Activated CD4-positive, alpha-beta T cell treated with anti-CD3 and anti-CD28 coated beads for 36 hours (primary cell): ENCODE measurements at regions of chr6 and their contacts with region 1.

Region 1: DNA sequence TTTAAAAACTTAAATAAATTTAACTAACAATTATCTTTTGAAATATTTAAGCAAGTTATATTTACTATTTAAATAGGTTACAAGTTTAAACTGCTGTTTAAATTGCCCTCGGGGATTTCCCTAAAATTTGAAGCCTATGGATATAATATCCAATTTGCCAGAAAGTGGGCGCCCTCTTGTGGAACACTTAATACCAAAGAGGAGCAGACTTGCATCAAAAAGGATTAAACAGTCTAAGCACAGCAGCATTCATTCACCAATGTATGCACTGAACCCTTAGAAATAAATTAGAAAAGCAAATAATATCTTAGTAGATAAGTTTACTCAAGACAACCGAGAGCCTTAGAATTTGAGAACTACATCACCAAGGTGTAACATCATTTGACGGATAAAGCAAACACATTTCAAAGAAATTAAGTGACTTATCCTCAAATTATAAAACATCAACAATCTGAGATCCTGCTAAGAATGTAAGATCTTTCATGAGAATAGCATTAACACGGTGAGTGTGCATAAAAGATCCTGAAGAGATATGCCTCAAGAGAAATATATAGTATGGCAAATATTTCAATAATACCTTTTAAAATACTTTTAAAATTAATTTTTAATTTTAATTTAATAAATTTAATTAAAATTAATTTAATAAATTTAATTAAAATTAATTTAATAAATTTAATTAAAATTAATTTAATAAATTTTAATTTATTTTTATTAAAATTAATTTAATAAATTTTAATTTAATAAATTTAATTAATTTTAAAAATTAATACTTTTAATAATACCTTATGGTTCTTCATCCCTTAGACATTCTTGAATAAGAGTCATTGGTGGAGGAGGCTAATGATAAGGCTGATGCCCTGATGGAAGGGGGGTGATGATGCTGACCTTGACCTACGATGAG is 11.5 kb upstream of the MEP1A start:
- DNase-seq: peak; percentile 61
- ATAC-seq: peak; percentile 19
- H3K4me3 Mint-ChIP-seq: no peak overlapping the region
- H3K27ac Mint-ChIP-seq: no peak overlapping the region
- H3K4me1 Mint-ChIP-seq: no peaks in the 10 kb centered on the region
- H3K27me3 Mint-ChIP-seq: peaks cover 6% of the 10 kb centered on the region

Region 2: DNA sequence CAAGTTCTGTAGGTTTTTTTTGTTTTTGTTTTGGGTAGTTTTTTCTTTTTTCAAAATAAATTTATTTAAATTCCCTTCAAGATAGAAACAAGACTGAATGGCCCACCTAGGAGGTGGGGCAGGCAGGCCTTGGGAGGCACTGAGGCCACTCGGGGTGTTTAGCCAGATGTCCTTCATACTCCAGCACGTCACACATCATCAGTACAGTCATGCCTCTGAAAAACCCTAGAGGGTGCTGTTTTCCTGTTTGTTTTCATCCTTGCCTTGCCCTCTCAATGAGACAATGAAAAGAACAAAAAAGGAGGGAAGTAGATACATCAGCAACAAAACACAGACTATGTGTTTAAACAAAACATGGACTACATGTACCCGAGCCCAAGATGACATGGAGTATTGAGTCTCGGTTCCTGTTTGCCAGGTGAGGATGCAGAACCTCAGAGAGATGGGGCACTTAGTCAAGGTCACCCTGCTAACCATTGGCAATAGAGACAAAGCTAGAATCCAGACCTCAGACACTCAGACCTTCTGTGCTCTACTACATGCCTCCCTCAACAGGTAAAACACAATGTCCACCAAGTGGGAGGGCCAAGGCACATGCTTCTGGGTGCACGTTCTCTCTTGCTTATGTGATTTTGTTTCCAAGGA is 739.3 kb before region 1 on chr6:
- CTCF ChIA-PET with region 1: no interaction called
- POLR2A ChIA-PET with region 1: no interaction called
- intact Hi-C with region 1: loop called in 1 of 2 experiments (anchors 5 kb)
- DNase-seq: peak; percentile 18
- ATAC-seq: peak; percentile 80
- H3K4me3 Mint-ChIP-seq: no peak overlapping the region
- H3K27ac Mint-ChIP-seq: no peak overlapping the region
- H3K4me1 Mint-ChIP-seq: peaks cover 10% of the 10 kb centered on the region
- H3K27me3 Mint-ChIP-seq: no peaks in the 10 kb centered on the region

Region 3: GRCh38 chr6:46704562-46704961 is 77.2 kb before region 1 on chr6:
- CTCF ChIA-PET with region 1: interaction called, 3 read pairs
- POLR2A ChIA-PET with region 1: no interaction called
- intact Hi-C with region 1: loop called in 1 of 2 experiments (anchors 5 kb)
- DNase-seq: no peak
- ATAC-seq: peak; percentile 36
- H3K4me3 Mint-ChIP-seq: no peak overlapping the region
- H3K27ac Mint-ChIP-seq: no peak overlapping the region
- H3K4me1 Mint-ChIP-seq: no peaks in the 10 kb centered on the region
- H3K27me3 Mint-ChIP-seq: peaks cover 28% of the 10 kb centered on the region

Region 4: GRCh38 chr6:46729806-46730326 is 51.9 kb before region 1 on chr6:
- CTCF ChIA-PET with region 1: no interaction called
- POLR2A ChIA-PET with region 1: no interaction called
- intact Hi-C with region 1: loop called in 1 of 2 experiments (anchors 2 kb)
- DNase-seq: no peak
- ATAC-seq: no peak
- H3K4me3 Mint-ChIP-seq: no peak overlapping the region
- H3K27ac Mint-ChIP-seq: no peak overlapping the region
- H3K4me1 Mint-ChIP-seq: peaks cover 3% of the 10 kb centered on the region
- H3K27me3 Mint-ChIP-seq: peaks cover 55% of the 10 kb centered on the region

Region 5: GRCh38 chr6:46799657-46800056 is 17.9 kb after region 1 on chr6:
- CTCF ChIA-PET with region 1: no interaction called
- POLR2A ChIA-PET with region 1: no interaction called
- intact Hi-C with region 1: no loop called
- DNase-seq: no peak
- ATAC-seq: no peak
- H3K4me3 Mint-ChIP-seq: no peak overlapping the region
- H3K27ac Mint-ChIP-seq: no peak overlapping the region
- H3K4me1 Mint-ChIP-seq: no peaks in the 10 kb centered on the region
- H3K27me3 Mint-ChIP-seq: peaks cover 12% of the 10 kb centered on the region

Region 6: DNA sequence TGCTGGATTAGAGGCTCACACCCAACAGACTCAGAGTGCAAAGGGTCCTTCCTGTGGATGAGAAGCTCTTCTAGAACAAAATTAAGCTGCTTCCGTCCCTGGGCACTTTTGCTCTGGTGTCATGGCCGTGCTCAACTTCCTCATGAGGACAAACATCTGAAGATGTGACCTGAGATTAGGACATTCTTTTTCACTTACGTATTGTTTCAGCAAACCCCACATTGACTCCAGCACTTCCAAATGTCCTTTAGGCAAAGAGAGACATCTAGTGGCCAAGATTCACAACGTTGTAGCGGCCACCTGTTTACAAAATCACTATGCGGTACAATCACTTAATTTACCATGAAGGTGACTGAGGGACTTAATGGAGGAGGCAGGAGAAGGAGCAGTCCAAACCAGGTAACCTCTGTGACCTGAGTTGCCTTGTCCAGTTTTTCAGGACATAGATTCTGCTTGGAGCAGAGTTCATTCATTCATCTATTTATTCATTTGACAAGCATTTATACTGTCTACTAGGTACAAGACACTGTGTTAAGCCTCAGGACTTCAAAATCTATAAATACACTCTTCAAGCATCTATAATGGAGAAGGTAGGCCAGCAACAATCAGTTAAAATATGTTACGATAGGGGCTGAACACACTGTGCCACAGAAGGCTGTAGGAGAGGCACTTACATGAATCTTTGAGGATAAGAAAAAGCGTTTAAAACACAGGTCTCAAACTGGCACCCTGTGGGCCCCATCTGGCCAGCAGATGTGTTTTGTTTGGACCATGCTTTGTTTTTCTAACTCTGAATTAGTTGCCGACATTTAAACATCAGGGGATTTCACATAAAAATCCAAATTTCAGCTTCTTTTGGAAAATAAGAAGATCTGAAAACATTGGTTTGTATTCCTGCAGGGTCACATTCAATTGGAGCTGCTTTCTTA is 266.0 kb after region 1 on chr6:
- CTCF ChIA-PET with region 1: no interaction called
- POLR2A ChIA-PET with region 1: no interaction called
- intact Hi-C with region 1: loop called in 1 of 2 experiments (anchors 5 kb)
- DNase-seq: peak; percentile 42
- ATAC-seq: peak; percentile 72
- H3K4me3 Mint-ChIP-seq: no peak overlapping the region
- H3K27ac Mint-ChIP-seq: no peak overlapping the region
- H3K4me1 Mint-ChIP-seq: peaks cover 2% of the 10 kb centered on the region
- H3K27me3 Mint-ChIP-seq: peaks cover 10% of the 10 kb centered on the region